GM12878 (cell line): ENCODE measurements at regions of chr11 and their contacts with region 1.

Region 1: GRCh38 chr11:48020092-48020755 is 39.9 kb downstream of the PTPRJ start:
- DNase-seq: peak; percentile 66
- ATAC-seq: peak; percentile 91
- H3K4me3 ChIP-seq: peak overlapping the region; percentile 42
- H3K27ac ChIP-seq: peak overlapping the region; percentile 88
- H3K4me1 ChIP-seq: peaks cover 66% of the 10 kb centered on the region
- H3K27me3 ChIP-seq: no peaks in the 10 kb centered on the region
- CTCF ChIP-seq: peak in 2 of 3 experiments; percentile 28 to 38; a peak in 3 of 6 replicates
- EP300 ChIP-seq: no peak
- POLR2A ChIP-seq: 0 out of 2 replicates have a peak, but pooled peaks have one; percentile 37
- RAD21 ChIP-seq: peak; percentile 65

Region 2: GRCh38 chr11:47932544-47932943 is 87.7 kb before region 1 on chr11:
- CTCF ChIA-PET with region 1: interaction called, 10 read pairs
- POLR2A ChIA-PET with region 1: interaction called, 3 read pairs
- RAD21 ChIA-PET with region 1: interaction called, 7 read pairs
- SMC1A ChIA-PET with region 1: interaction called, 12 read pairs
- in situ Hi-C with region 1: no loop called
- intact Hi-C with region 1: no loop called
- DNase-seq: no peak
- ATAC-seq: peak; percentile 54; the same call in 2 of the 3 replicates
- H3K4me3 ChIP-seq: no peak overlapping the region
- H3K27ac ChIP-seq: no peak overlapping the region
- H3K4me1 ChIP-seq: peaks cover 4% of the 10 kb centered on the region
- H3K27me3 ChIP-seq: peaks cover 0 to 2% of the 10 kb centered on the region in 2 experiments; a peak in 2 of 4 replicates
- CTCF ChIP-seq: no peak
- EP300 ChIP-seq: no peak
- POLR2A ChIP-seq: no peak
- RAD21 ChIP-seq: no peak

Region 3: GRCh38 chr11:47980245-47981049 is 39.8 kb before region 1 on chr11 and contains the start of gene PTPRJ:
- CTCF ChIA-PET with region 1: interaction called, 5 read pairs
- POLR2A ChIA-PET with region 1: no interaction called
- RAD21 ChIA-PET with region 1: interaction called, 12 read pairs
- SMC1A ChIA-PET with region 1: interaction called, 12 read pairs
- in situ Hi-C with region 1: no loop called
- intact Hi-C with region 1: no loop called
- DNase-seq: no peak
- ATAC-seq: peak; percentile 75
- H3K4me3 ChIP-seq: peak within 1 kb of the TSS; percentile 96
- H3K27ac ChIP-seq: peak within 1 kb of the TSS; percentile 68
- H3K4me1 ChIP-seq: peaks cover 14% of the 10 kb centered on the region
- H3K27me3 ChIP-seq: peaks cover 0 to 3% of the 10 kb centered on the region in 2 experiments; a peak in 2 of 4 replicates
- CTCF ChIP-seq: no peak
- EP300 ChIP-seq: no peak
- POLR2A ChIP-seq: no peak; the same call in 1 of the 2 replicates
- RAD21 ChIP-seq: no peak
- polyA plus RNA-seq, gene PTPRJ: 0.77 to 0.91 TPM

Region 4: GRCh38 chr11:48034926-48035871 is 15.0 kb after region 1 on chr11:
- CTCF ChIA-PET with region 1: no interaction called
- POLR2A ChIA-PET with region 1: no interaction called
- RAD21 ChIA-PET with region 1: no interaction called
- SMC1A ChIA-PET with region 1: interaction called, 4 read pairs
- in situ Hi-C with region 1: no loop called
- intact Hi-C with region 1: loop called (anchors 2 kb)
- DNase-seq: no peak
- ATAC-seq: no peak
- H3K4me3 ChIP-seq: no peak overlapping the region
- H3K27ac ChIP-seq: no peak overlapping the region
- H3K4me1 ChIP-seq: peaks cover 49% of the 10 kb centered on the region
- H3K27me3 ChIP-seq: no peaks in the 10 kb centered on the region
- CTCF ChIP-seq: no peak
- EP300 ChIP-seq: no peak
- POLR2A ChIP-seq: no peak
- RAD21 ChIP-seq: no peak